IMR-90 (cell line): ENCODE measurements at regions of chr11 and their contacts with region 1.

Region 1: DNA sequence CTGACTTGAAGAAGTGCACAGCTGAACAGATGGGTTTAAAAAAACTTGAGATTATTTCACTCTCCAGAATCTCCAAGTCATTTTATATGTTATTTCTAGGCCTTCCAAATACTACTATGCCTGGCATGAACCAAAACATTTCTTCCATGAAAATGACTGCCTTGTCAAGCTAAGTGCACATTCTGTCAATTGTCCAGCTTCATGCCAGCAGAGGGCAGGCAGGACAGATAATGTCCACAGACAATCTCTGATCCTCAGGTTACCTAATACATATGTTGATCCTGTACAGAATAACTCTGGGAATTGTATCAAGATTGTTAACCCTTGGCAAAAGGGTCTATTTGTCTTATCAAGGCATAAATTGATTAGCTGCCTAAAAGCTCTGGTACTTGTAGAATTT is 229.5 kb downstream of the AASDHPPT start:
- DNase-seq: no peak
- ATAC-seq: no peak
- H3K4me3 ChIP-seq: no peak overlapping the region
- H3K27ac ChIP-seq: no peak overlapping the region
- H3K4me1 ChIP-seq: no peaks in the 10 kb centered on the region
- H3K27me3 ChIP-seq: no peaks in the 10 kb centered on the region
- CTCF ChIP-seq: peak; percentile 20; the same call in 1 of the 2 replicates
- POLR2A ChIP-seq: no peak
- RAD21 ChIP-seq: peak; percentile 34

Region 2: GRCh38 chr11:106381901-106382300 is 75.0 kb after region 1 on chr11:
- CTCF ChIA-PET with region 1: no interaction called
- POLR2A ChIA-PET with region 1: no interaction called
- dilution Hi-C with region 1: no loop called
- in situ Hi-C with region 1: no loop called
- intact Hi-C with region 1: no loop called
- DNase-seq: no peak
- ATAC-seq: no peak
- H3K4me3 ChIP-seq: no peak overlapping the region
- H3K27ac ChIP-seq: no peak overlapping the region
- H3K4me1 ChIP-seq: no peaks in the 10 kb centered on the region; the same call in 1 of the 2 replicates
- H3K27me3 ChIP-seq: no peaks in the 10 kb centered on the region
- CTCF ChIP-seq: no peak
- POLR2A ChIP-seq: no peak
- RAD21 ChIP-seq: no peak

Region 3: DNA sequence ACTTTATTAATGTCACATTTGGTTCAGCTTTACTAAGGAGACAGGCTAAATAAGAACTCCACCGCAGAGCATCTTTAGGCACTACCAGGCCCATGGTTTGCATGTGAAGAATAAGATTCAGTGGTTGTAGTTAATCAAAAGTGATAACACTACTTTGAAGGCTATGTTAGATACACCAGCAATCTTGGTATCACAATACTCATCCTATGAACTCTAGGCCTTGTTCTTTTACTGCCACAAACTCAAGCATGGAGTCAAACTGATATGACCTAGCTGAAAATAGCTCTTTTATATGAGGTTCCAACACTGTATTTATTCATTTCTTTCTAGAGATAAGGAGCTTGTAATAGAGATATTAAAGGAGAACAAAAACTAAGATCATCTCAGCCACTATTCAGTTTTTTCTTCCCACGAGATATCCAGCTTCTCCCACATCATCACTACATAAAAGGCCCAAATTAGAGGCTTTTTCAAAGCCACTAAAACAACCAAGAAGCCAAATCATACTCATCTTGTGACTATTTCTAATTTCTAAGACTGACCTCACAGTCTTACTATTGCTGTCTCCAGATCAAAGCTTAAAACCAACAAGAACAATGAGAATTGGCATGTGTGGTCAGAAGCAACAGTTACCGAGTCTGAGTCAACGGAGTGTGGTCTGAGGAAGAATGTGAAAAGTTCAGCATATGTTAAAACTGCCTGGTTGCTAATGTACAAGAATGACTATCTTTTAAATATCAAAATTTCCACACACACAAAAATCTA is 736.5 kb after region 1 on chr11:
- CTCF ChIA-PET with region 1: no interaction called
- POLR2A ChIA-PET with region 1: no interaction called
- dilution Hi-C with region 1: no loop called
- in situ Hi-C with region 1: no loop called
- intact Hi-C with region 1: loop called (anchors 5 kb)
- DNase-seq: peak; percentile 82
- ATAC-seq: peak; percentile 66
- H3K4me3 ChIP-seq: no peak overlapping the region
- H3K27ac ChIP-seq: no peak overlapping the region
- H3K4me1 ChIP-seq: no peaks in the 10 kb centered on the region
- H3K27me3 ChIP-seq: no peaks in the 10 kb centered on the region
- CTCF ChIP-seq: no peak
- POLR2A ChIP-seq: no peak
- RAD21 ChIP-seq: no peak